CD4-positive, alpha-beta T cell (primary cell): ENCODE measurements at regions of chr18 and their contacts with region 1.

Region 1: DNA sequence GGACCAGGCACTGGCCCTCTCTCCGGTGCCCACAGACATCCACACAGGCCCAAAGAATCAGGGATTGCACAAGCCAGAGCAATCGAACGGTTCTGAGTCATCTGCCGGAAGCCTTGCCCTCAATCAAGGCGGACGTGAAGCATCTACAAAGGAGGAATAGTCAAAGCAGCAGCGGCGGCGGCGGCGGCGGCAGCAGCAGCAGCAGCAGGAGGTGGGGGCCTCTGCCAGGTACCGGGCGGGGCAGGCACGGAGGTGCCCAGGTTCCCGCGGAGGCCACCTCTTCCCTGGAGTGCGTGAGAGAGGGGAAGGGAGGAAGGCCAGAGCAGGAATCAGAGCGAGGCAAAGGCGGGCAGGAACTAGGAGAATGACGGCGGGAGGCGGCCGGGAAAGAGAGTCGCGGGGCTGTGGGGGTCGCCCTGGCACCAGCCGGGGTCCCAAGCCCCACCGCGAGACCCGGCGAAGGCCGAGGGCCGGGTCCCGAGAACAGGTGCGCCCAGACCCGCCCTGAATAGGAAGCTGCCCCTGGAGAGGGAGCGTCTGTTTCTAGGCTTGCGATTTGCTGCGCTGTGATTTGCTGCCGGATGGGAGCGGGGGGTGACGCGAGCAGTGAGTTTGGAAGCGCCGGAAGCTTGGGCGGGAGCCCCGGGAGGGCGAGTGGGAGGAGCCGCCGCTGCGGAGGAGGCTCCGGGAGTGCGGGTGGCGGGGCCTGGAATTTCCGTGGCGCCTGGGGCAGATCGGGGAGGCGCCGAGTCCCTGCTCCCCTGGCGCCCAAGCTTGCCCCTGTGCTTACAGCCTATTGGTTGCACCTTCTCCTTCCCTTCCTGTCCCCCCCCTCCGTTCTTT is at the start of gene SERPINB8:
- DNase-seq: peak; percentile 65 to 89 (median 76)
- ATAC-seq: peak; percentile 90
- H3K4me3 ChIP-seq: peak within 1 kb of the TSS; percentile 77
- H3K4me3 Mint-ChIP-seq: peak within 1 kb of the TSS; percentile 99
- H3K27ac ChIP-seq: peak within 1 kb of the TSS; percentile 84 to 93
- H3K27ac Mint-ChIP-seq: peak within 1 kb of the TSS; percentile 99
- H3K4me1 ChIP-seq: peaks cover 21% of the 10 kb centered on the region
- H3K4me1 Mint-ChIP-seq: peaks cover 27% of the 10 kb centered on the region
- H3K27me3 ChIP-seq: no peaks in the 10 kb centered on the region
- H3K27me3 Mint-ChIP-seq: peaks cover 4% of the 10 kb centered on the region
- CTCF ChIP-seq: peak; percentile 2
- total RNA-seq, gene SERPINB8: 9.8 to 11.0 TPM

Region 2: DNA sequence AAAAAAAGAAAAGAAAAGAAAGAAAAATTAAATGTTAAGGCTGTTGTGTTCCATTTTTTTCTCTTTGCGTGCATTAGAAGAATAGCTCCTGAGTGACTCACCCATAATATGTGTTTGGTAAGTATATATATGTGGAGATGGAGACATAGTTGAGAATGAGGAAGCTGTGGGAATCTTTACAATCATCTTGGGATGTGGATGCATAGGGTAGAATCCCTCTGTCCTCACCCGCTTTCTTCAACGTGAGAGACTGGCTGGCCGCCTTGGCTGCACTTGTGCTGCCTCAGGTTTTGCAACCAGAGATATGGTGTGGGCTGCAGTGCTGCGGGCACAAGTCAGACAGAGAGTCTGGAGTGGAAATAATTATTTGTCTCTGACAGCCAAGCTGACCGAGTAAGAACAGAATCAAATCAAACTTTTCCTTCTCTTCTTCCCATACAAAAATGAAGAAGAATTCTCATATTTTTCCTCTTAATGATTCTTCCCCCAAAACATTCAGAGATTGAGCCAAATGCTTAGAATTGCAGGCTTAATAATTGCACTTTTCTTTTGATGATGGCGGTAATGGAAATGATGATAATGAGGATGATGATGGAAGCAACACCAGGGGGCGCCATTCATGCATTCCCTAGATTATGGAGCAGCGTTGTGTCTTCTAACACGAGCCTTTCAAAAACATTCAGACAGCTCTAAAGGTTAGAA is 146.5 kb before region 1 on chr18:
- CTCF ChIA-PET with region 1: no interaction called
- POLR2A ChIA-PET with region 1: no interaction called
- intact Hi-C with region 1: loop called in 1 of 2 experiments (anchors 10 kb)
- DNase-seq: peak in 5 of 14 experiments; percentile 1 to 48 (median 23)
- ATAC-seq: no peak
- H3K4me3 ChIP-seq: no peak overlapping the region
- H3K4me3 Mint-ChIP-seq: no peak overlapping the region
- H3K27ac ChIP-seq: no peak overlapping the region
- H3K27ac Mint-ChIP-seq: no peak overlapping the region
- H3K4me1 ChIP-seq: no peaks in the 10 kb centered on the region
- H3K4me1 Mint-ChIP-seq: no peaks in the 10 kb centered on the region
- H3K27me3 ChIP-seq: peaks cover 0 to under 1% of the 10 kb centered on the region in 2 experiments
- H3K27me3 Mint-ChIP-seq: peaks cover 30% of the 10 kb centered on the region
- CTCF ChIP-seq: peak; percentile 24